Activated CD4-positive, alpha-beta T cell treated with anti-CD3 and anti-CD28 coated beads, Interleukin-2, amount 10 ng/mL, durations not matched to agents 24 days and 14 days (primary cell): ENCODE measurements at regions of chr6 and their contacts with region 1.

Region 1: DNA sequence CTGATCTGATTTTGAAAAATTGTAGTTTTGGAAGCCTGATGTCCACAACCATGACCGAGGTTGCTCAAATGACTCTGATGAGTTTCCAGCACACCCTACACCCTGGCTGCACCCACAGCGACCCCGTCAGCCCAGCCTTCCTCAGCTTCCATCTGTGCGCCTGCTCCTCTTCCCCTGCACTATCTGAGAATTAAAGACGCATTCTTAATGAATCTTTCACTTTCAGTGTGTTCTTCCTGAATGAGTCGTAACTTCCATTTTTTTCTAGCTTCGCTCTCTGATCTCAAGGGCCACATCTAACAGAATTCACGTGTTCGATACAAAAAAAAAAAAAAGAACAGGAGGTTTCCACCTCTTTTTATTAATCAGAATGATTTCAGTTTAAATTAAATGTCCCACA is 21.3 kb upstream of the RREB1 start:
- DNase-seq: peak; percentile 76
- H3K4me3 Mint-ChIP-seq: peak overlapping the region; percentile 76
- H3K27ac Mint-ChIP-seq: no peak overlapping the region
- H3K4me1 Mint-ChIP-seq: peaks cover 25% of the 10 kb centered on the region
- H3K27me3 Mint-ChIP-seq: peaks cover 54% of the 10 kb centered on the region

Region 2: GRCh38 chr6:7107578-7108195 is 21.2 kb after region 1 on chr6 and contains the start of gene RREB1:
- intact Hi-C with region 1: loop called (anchors 1 kb)
- DNase-seq: peak; percentile 86
- H3K4me3 Mint-ChIP-seq: peak within 1 kb of the TSS; percentile 96
- H3K27ac Mint-ChIP-seq: peak within 1 kb of the TSS; percentile 96
- H3K4me1 Mint-ChIP-seq: peaks cover 33% of the 10 kb centered on the region
- H3K27me3 Mint-ChIP-seq: peaks cover 8% of the 10 kb centered on the region
- total RNA-seq, gene RREB1: 13.9 and 16.8 TPM in 2 replicates

Region 3: DNA sequence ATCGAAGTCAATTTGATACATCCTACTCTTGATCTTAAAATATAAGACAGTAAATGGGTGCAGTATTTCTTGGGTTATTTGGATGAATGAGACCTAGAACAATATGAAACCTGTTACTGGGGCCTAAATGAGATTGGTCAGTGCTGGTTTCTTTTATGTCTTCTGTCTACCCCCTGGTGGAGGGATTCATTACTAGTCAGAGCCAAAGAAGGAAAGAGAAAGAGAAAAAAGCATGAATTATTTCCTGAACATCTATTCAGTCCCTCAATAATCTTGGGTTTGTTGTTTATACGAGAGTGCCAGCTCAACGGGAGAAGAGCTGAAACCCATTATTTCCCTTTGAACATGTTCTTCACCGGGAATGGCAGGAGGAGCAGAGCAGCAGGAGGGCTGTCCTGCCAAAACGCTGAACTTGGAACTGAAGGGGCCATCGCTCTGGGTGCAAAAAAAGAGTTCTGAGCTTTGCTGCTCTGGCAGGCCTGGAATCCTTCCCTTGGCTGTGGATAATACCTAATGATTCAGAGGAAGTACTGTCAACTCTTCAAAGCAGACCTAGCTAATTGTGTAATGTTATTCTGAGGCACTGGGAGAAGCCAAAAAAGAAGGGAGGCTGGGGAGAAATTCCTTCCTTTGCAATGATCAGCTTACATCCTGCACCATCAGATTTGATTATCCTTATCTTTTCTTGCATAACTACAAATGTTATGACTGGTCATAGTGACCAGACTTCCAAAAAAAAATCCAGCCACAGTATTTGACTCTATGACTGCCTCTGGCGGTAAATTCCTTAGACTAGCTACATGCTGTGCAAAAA is 905.7 kb after region 1 on chr6:
- intact Hi-C with region 1: no loop called
- DNase-seq: no peak
- H3K4me3 Mint-ChIP-seq: no peak overlapping the region
- H3K27ac Mint-ChIP-seq: no peak overlapping the region
- H3K4me1 Mint-ChIP-seq: no peaks in the 10 kb centered on the region
- H3K27me3 Mint-ChIP-seq: no peaks in the 10 kb centered on the region